ENCODE measurements at regions of chr13 and their contacts with region 1.

Region 1: DNA sequence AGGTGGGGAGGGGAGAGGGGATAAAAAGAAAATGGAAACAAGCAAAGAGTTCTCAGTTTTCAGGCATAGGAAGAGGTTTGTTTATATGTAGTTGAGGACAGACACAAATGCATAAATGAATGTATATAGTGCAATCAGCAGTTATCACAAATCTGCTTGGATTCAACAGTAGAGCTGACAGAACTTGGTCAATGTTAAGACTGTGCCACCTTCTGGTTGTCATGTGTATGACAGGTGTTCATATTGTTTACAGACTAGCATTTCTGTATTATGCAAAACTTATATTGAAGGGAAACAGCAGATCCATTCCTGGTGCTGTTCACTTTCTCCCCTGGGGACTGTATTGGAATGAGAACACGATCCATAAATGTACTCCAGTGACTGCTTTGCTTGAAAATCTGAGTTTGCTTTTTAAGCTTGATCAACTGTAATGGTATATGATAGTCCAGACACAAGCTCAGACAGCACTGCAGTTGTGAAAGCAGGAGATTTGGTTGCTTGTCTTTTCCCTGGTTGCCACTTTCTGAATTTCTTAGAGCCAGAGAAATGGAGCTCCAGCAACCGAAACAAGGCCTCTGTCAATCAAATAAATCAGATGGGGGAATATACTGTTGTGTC is 319.5 kb upstream of the OBI1 start:
- DNase-seq: peak in 4 of 5 donors; percentile 30 to 43 (median 42)
- H3K4me3 ChIP-seq: no peak overlapping the region
- H3K4me3 Mint-ChIP-seq: no peak overlapping the region
- H3K27ac ChIP-seq: no peak overlapping the region
- H3K27ac Mint-ChIP-seq: no peak overlapping the region
- H3K4me1 ChIP-seq: no peaks in the 10 kb centered on the region
- H3K4me1 Mint-ChIP-seq: no peaks in the 10 kb centered on the region
- H3K27me3 ChIP-seq: no peaks in the 10 kb centered on the region
- H3K27me3 Mint-ChIP-seq: peaks cover 0 to 12% of the 10 kb centered on the region in 2 donors

Region 2: DNA sequence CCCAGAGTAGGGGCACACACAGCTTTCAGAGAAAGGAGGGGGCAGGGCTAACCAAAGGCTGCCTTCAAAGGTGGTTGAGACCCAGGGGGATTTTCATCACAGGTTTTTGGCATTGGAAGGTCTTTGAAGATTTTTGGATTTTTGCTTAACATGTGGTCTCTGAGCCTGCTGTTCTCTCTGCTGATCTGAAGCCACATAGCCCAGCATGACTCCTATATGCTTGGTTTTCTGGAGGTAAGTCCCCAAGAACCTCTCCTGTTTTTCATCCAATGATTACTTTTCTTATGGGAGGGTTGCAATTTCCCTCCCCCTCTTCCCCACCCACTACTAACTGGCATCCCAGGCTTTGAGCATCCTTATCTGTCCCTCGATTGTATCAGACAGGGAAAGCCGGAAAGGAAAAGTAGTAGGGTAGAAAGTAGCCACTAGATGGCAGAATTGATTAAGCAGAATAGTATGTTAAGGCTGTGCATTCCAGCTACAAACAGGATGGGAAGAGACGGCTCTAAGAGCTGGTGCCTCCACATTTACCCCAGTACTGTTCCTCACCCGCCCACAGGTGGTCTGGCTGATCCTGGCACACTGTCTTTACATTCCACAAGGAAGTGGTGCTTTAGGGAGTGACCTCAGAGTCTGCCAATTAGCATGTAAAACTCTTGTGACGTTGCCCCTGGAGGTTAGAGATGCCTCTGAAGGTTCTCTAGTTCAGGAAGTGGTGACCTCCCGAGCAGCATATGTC is 840.9 kb before region 1 on chr13:
- CTCF ChIA-PET with region 1: interaction called, 86 read pairs
- POLR2A ChIA-PET with region 1: no interaction called
- intact Hi-C with region 1: loop called (anchors 1 kb)
- DNase-seq: peak in 4 of 5 donors; percentile 27 to 41 (median 30)
- H3K4me3 ChIP-seq: no peak overlapping the region
- H3K4me3 Mint-ChIP-seq: peak overlapping the region in 6 of 8 donors; percentile 20 to 71 (median 62)
- H3K27ac ChIP-seq: no peak overlapping the region
- H3K27ac Mint-ChIP-seq: peak overlapping the region in 1 of 7 donors; percentile 34
- H3K4me1 ChIP-seq: peaks cover 5% of the 10 kb centered on the region
- H3K4me1 Mint-ChIP-seq: peaks cover 4 to 6% (median 5%) of the 10 kb centered on the region in 4 donors
- H3K27me3 ChIP-seq: no peaks in the 10 kb centered on the region
- H3K27me3 Mint-ChIP-seq: peaks cover 0 to 3% of the 10 kb centered on the region in 2 donors

Region 3: GRCh38 chr13:78317030-78317429 is 661.5 kb before region 1 on chr13:
- CTCF ChIA-PET with region 1: no interaction called
- POLR2A ChIA-PET with region 1: no interaction called
- intact Hi-C with region 1: loop called (anchors 5 kb)
- DNase-seq: no peak
- H3K4me3 ChIP-seq: no peak overlapping the region
- H3K4me3 Mint-ChIP-seq: no peak overlapping the region
- H3K27ac ChIP-seq: no peak overlapping the region
- H3K27ac Mint-ChIP-seq: no peak overlapping the region
- H3K4me1 ChIP-seq: no peaks in the 10 kb centered on the region
- H3K4me1 Mint-ChIP-seq: no peaks in the 10 kb centered on the region
- H3K27me3 ChIP-seq: no peaks in the 10 kb centered on the region
- H3K27me3 Mint-ChIP-seq: no peaks in the 10 kb centered on the region

Region 4: GRCh38 chr13:79011179-79011578 is 32.7 kb after region 1 on chr13:
- CTCF ChIA-PET with region 1: no interaction called
- POLR2A ChIA-PET with region 1: no interaction called
- intact Hi-C with region 1: no loop called
- DNase-seq: no peak
- H3K4me3 ChIP-seq: no peak overlapping the region
- H3K4me3 Mint-ChIP-seq: no peak overlapping the region
- H3K27ac ChIP-seq: no peak overlapping the region
- H3K27ac Mint-ChIP-seq: no peak overlapping the region
- H3K4me1 ChIP-seq: no peaks in the 10 kb centered on the region
- H3K4me1 Mint-ChIP-seq: no peaks in the 10 kb centered on the region
- H3K27me3 ChIP-seq: no peaks in the 10 kb centered on the region
- H3K27me3 Mint-ChIP-seq: peaks cover 0 to 3% of the 10 kb centered on the region in 2 donors

Region 5: DNA sequence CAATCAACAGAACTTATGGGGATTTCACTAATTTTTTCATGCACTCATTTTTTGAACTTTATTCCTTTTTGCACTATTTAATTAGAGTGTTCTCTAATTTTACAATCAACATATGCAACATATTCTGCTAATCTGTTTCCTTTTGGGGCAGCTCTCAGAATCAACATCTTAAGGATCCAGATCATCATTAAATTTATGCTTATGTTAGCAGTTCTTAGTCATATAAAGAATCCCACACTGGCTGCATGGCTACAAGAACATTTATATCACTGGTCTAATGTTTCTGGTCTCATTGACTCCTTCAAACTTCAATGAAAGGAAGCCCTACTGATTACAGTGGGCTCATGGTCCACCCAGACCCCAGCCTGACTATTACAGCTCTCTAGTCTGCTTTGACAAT is 182.3 kb after region 1 on chr13:
- CTCF ChIA-PET with region 1: no interaction called
- POLR2A ChIA-PET with region 1: no interaction called
- intact Hi-C with region 1: no loop called
- DNase-seq: no peak
- H3K4me3 ChIP-seq: no peak overlapping the region
- H3K4me3 Mint-ChIP-seq: no peak overlapping the region
- H3K27ac ChIP-seq: no peak overlapping the region
- H3K27ac Mint-ChIP-seq: no peak overlapping the region
- H3K4me1 ChIP-seq: no peaks in the 10 kb centered on the region
- H3K4me1 Mint-ChIP-seq: no peaks in the 10 kb centered on the region
- H3K27me3 ChIP-seq: no peaks in the 10 kb centered on the region
- H3K27me3 Mint-ChIP-seq: peaks cover 8 to 9% of the 10 kb centered on the region in 2 donors

Region 6: GRCh38 chr13:79393564-79394249 is 415.2 kb after region 1 on chr13:
- CTCF ChIA-PET with region 1: interaction called, 3 read pairs
- POLR2A ChIA-PET with region 1: no interaction called
- intact Hi-C with region 1: loop called (anchors 1 kb)
- DNase-seq: peak; percentile 40 to 61 (median 49)
- H3K4me3 ChIP-seq: peak overlapping the region; percentile 25 to 35
- H3K4me3 Mint-ChIP-seq: peak overlapping the region; percentile 75 to 88 (median 82)
- H3K27ac ChIP-seq: peak overlapping the region; percentile 40
- H3K27ac Mint-ChIP-seq: peak overlapping the region; percentile 87 to 93 (median 90)
- H3K4me1 ChIP-seq: peaks cover 62% of the 10 kb centered on the region
- H3K4me1 Mint-ChIP-seq: peaks cover 44 to 64% (median 56%) of the 10 kb centered on the region in 4 donors
- H3K27me3 ChIP-seq: no peaks in the 10 kb centered on the region
- H3K27me3 Mint-ChIP-seq: no peaks in the 10 kb centered on the region

Region 7: DNA sequence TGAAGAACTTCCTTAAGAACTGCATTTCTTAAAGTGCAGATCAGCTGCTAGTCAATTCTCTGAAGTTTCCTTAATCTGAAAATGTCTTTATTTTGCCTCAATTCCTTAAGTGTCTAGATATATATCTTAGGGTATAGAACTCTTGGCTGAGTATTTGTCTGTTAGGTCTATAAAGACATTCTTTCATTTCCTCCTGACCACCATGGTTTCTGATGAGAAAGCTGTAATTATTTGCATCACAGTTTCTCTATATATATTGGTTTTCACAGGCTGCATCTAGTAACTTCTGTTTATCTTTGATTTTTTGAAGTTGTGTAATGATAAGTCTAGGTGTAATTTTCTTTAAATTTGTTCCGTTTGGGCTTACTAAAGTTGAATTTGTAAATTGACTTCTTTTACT is 517.7 kb after region 1 on chr13:
- CTCF ChIA-PET with region 1: no interaction called
- POLR2A ChIA-PET with region 1: no interaction called
- intact Hi-C with region 1: no loop called
- DNase-seq: no peak
- H3K4me3 ChIP-seq: no peak overlapping the region
- H3K4me3 Mint-ChIP-seq: no peak overlapping the region
- H3K27ac ChIP-seq: no peak overlapping the region
- H3K27ac Mint-ChIP-seq: no peak overlapping the region
- H3K4me1 ChIP-seq: peaks cover 19% of the 10 kb centered on the region
- H3K4me1 Mint-ChIP-seq: peaks cover 32 to 45% (median 35%) of the 10 kb centered on the region in 4 donors
- H3K27me3 ChIP-seq: no peaks in the 10 kb centered on the region
- H3K27me3 Mint-ChIP-seq: peaks cover 0 to 1% of the 10 kb centered on the region in 2 donors

Region 8: GRCh38 chr13:79541426-79542049 is 563.0 kb after region 1 on chr13:
- CTCF ChIA-PET with region 1: no interaction called
- POLR2A ChIA-PET with region 1: no interaction called
- intact Hi-C with region 1: loop called (anchors 10 kb)
- DNase-seq: peak in 4 of 5 donors; percentile 59 to 66 (median 62)
- H3K4me3 ChIP-seq: no peak overlapping the region
- H3K4me3 Mint-ChIP-seq: no peak overlapping the region
- H3K27ac ChIP-seq: no peak overlapping the region
- H3K27ac Mint-ChIP-seq: no peak overlapping the region
- H3K4me1 ChIP-seq: no peaks in the 10 kb centered on the region
- H3K4me1 Mint-ChIP-seq: peaks cover 0 to 2% (median 0%) of the 10 kb centered on the region in 4 donors
- H3K27me3 ChIP-seq: no peaks in the 10 kb centered on the region
- H3K27me3 Mint-ChIP-seq: no peaks in the 10 kb centered on the region

Measured in CD4-positive, alpha-beta memory T cell (primary cell).